Activated T-helper 2 cell treated with anti-CD3 and anti-CD28 coated beads, Interferon-gamma antibody, Interleukin-2, Interleukin-4, amounts not matched to agents 10 μg/mL and 5 μg/mL and 100 μg/mL, durations not matched to agents 14 hours and 24 hours and 36 hours (primary cell): ENCODE measurements at regions of chr11 and their contacts with region 1.

Region 1: DNA sequence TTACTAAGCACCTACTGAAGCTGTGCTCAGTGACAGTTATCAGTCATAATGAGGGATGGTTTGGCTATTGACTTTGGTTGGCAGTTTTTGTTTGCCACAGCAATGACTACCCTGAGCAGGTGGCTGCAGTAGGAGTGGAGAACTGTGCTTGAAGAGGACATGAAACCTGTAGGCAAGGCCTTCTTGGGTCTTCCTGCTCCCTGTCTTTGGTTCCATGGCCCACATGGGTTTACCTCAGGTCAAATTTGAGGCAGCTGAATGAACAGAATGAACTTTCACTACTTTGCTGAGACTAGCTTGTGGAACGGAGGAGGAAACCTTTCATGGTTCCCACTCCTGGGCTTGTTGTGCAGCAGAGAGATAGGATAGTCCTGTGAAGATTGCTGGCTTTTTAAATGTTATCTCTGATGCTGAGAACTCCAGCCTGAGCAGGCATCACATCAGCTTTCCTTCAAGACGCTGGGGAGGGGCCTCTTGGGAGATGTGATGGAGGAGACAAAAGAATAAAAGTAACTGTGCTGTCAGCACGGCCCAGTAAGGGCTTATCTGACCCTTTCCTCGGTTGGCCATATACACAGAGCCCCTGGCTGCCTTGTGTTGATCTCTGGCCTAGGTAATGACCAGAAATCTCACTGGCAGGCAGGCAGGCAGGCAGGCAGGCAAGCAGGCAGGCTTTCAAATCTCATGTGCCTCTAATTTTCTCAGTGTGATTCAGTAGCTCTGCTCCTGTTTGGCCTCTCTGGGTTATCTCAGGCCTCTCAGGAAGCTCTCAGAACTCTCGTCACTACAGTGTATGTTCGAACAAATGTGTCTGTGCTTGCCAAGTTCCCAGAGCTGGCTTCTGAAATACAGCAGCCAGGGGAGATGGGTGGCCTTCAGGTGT is 12.0 kb downstream of the STIM1 start:
- DNase-seq: no peak
- H3K4me3 Mint-ChIP-seq: peak overlapping the region; percentile 34
- H3K27ac Mint-ChIP-seq: peak overlapping the region; percentile 82
- H3K4me1 Mint-ChIP-seq: peaks cover 74% of the 10 kb centered on the region
- H3K27me3 Mint-ChIP-seq: no peaks in the 10 kb centered on the region

Region 2: DNA sequence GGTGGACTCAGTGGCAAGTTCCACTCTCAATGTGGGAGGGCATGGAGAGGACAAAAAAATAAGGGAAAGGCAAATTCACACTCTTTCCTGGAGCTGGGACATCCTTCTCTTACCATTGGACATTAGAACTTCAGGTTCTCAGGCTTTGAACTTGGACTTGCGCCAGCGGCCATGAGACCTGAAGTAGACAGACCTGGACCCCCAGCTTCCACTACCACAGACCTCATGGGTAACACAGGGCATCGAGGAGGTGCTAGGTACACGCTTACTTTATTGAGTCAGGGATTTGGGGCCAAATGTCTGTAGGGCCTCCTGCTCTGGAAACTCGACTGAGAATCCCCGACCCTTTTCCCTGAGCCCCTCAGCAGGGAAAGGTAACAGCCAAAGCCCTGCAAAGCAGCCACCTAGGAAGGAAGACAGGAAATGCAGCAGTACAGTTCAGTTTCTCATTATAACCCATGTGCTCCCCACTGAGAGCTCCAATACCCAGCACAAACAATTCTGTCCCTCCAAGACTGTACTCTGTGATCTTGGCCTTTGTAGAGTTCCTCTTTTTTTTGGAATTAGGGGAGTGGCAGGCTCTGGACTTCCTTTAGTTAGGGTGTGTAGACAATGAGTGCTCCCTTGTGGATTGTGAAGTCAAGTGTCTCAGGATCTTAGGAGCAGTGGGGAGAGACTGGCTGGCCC is 202.0 kb before region 1 on chr11:
- intact Hi-C with region 1: no loop called
- DNase-seq: no peak
- H3K4me3 Mint-ChIP-seq: no peak overlapping the region
- H3K27ac Mint-ChIP-seq: no peak overlapping the region
- H3K4me1 Mint-ChIP-seq: no peaks in the 10 kb centered on the region
- H3K27me3 Mint-ChIP-seq: no peaks in the 10 kb centered on the region

Region 3: GRCh38 chr11:3781423-3781822 is 86.0 kb before region 1 on chr11:
- intact Hi-C with region 1: no loop called
- DNase-seq: no peak
- H3K4me3 Mint-ChIP-seq: no peak overlapping the region
- H3K27ac Mint-ChIP-seq: peak overlapping the region; percentile 64
- H3K4me1 Mint-ChIP-seq: peaks cover 45% of the 10 kb centered on the region
- H3K27me3 Mint-ChIP-seq: no peaks in the 10 kb centered on the region

Region 4: GRCh38 chr11:3854977-3855807 is 12.3 kb before region 1 on chr11 and contains the start of gene STIM1:
- intact Hi-C with region 1: loop called (anchors 2 kb)
- DNase-seq: peak; percentile 98
- H3K4me3 Mint-ChIP-seq: peak within 1 kb of the TSS; percentile 99
- H3K27ac Mint-ChIP-seq: peak within 1 kb of the TSS; percentile 96
- H3K4me1 Mint-ChIP-seq: peaks cover 52% of the 10 kb centered on the region
- H3K27me3 Mint-ChIP-seq: no peaks in the 10 kb centered on the region
- total RNA-seq, gene STIM1: 77.6 and 78.0 TPM in 2 replicates